ENCODE measurements at regions of chr11 and their contacts with region 1.

Region 1: GRCh38 chr11:118401151-118401878 is at the start of gene ATP5MG:
- DNase-seq: peak; percentile 88
- H3K4me3 Mint-ChIP-seq: peak within 1 kb of the TSS; percentile 99
- H3K27ac Mint-ChIP-seq: peak within 1 kb of the TSS; percentile 99
- H3K4me1 Mint-ChIP-seq: peaks cover 60% of the 10 kb centered on the region
- H3K27me3 Mint-ChIP-seq: no peaks in the 10 kb centered on the region
- total RNA-seq, gene ATP5MG: 237 and 266 TPM in 2 replicates

Region 2: DNA sequence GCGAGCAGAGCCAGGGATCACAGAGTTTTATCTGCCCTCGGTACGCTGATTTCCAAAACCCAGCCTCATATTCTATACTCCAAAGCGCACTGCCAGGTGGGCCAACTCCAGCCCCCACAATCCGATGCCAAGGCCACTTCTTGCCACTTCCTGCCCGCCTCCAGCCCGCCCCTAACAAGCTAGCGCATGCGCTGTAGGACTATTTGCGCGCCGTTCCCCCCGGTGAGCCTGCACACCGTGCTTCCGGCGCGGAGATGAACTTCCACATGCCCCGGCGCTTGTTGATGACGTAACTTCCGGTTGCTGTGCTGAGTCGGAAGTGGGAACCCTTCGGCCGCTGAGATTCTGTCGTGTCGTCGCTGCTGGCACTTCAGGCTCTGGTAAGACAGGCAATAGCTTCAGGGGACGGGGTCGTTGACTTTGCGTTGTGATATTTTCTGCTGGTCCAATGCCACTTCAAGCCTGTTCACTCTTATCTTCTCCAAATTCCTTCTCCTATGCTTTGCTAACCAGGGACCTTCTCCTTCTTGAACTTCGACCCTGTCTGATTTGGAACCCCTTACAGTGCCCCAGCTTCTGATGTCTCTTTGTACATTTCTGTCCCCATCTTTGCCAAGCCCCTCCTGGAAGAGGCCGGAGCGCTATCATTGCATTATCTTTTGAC is 41.9 kb before region 1 on chr11 and contains the start of gene UBE4A:
- intact Hi-C with region 1: loop called (anchors 1 kb)
- DNase-seq: peak; percentile 96
- H3K4me3 Mint-ChIP-seq: peak within 1 kb of the TSS; percentile 92
- H3K27ac Mint-ChIP-seq: peak within 1 kb of the TSS; percentile 84
- H3K4me1 Mint-ChIP-seq: peaks cover 33% of the 10 kb centered on the region
- H3K27me3 Mint-ChIP-seq: no peaks in the 10 kb centered on the region
- total RNA-seq, gene UBE4A: 41.2 and 44.1 TPM in 2 replicates

Region 3: GRCh38 chr11:118415739-118416284 is 14.5 kb after region 1 on chr11:
- intact Hi-C with region 1: loop called (anchors 1 kb)
- DNase-seq: peak; percentile 32
- H3K4me3 Mint-ChIP-seq: no peak overlapping the region
- H3K27ac Mint-ChIP-seq: no peak overlapping the region
- H3K4me1 Mint-ChIP-seq: peaks cover 3% of the 10 kb centered on the region
- H3K27me3 Mint-ChIP-seq: no peaks in the 10 kb centered on the region

Region 4: GRCh38 chr11:118448294-118448693 is 47.0 kb after region 1 on chr11:
- intact Hi-C with region 1: loop called (anchors 2 kb)
- DNase-seq: no peak
- H3K4me3 Mint-ChIP-seq: no peak overlapping the region
- H3K27ac Mint-ChIP-seq: peak overlapping the region; percentile 9
- H3K4me1 Mint-ChIP-seq: peaks cover 56% of the 10 kb centered on the region
- H3K27me3 Mint-ChIP-seq: no peaks in the 10 kb centered on the region

Region 5: GRCh38 chr11:118488480-118489109 is 87.3 kb after region 1 on chr11:
- intact Hi-C with region 1: loop called (anchors 2 kb)
- DNase-seq: peak; percentile 67
- H3K4me3 Mint-ChIP-seq: no peak overlapping the region
- H3K27ac Mint-ChIP-seq: peak overlapping the region; percentile 18
- H3K4me1 Mint-ChIP-seq: peaks cover 5% of the 10 kb centered on the region
- H3K27me3 Mint-ChIP-seq: no peaks in the 10 kb centered on the region

Region 6: DNA sequence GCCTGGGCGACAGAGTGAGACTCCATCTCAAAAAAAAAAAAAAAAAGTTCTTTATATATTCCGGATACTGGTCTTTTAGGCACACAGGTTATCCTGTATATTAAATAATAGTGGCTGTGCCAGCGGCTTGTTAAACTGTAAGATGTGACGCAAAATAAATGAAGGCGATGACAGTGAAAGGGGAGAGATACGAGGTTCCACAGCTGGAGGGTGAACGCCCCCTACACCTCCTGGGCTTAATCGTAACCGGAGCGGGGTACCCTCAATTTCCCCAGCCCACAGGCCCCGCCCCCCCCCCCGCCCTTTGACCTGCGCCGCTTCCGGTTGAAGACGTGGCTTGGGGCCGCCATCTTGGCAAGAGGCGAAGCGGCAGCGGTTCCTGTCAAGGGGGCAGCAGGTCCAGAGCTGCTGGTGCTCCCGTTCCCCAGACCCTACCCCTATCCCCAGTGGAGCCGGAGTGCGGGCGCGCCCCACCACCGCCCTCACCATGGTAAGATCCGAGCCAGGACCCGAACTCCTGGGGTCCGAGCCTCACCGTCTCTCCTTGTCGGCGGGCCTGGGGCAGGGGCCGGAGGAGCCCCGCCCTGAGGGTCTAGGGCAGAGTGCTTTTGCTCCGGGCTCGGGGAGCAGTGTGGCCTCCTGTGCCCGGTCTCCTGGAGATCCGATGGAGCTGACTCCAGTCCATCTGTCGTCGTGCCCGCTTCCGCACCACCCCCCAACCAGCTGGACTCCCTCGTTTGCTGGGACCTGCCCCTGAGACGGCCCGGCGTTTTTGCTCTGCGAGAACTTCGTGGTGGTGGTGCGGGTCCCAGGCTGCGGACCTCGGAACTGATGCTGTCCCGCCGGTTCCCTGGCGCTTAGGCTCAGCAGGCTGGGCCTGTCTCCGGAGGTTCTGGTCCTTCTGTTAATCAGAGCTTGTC is 171.0 kb after region 1 on chr11 and contains the start of gene ARCN1:
- intact Hi-C with region 1: loop called (anchors 2 kb)
- DNase-seq: peak; percentile 72
- H3K4me3 Mint-ChIP-seq: peak within 1 kb of the TSS; percentile 99
- H3K27ac Mint-ChIP-seq: peak within 1 kb of the TSS; percentile 97
- H3K4me1 Mint-ChIP-seq: peaks cover 29% of the 10 kb centered on the region
- H3K27me3 Mint-ChIP-seq: no peaks in the 10 kb centered on the region
- total RNA-seq, gene ARCN1: 132 and 133 TPM in 2 replicates

Measured in activated T-helper 2 cell treated with anti-CD3 and anti-CD28 coated beads, Interferon-gamma antibody, Interleukin-2, Interleukin-4, amounts not matched to agents 10 μg/mL and 5 μg/mL and 100 μg/mL, durations not matched to agents 14 hours and 24 hours and 36 hours (primary cell).